Sigmoid colon (tissue), 7 donors: ENCODE measurements at regions of chr1 and their contacts with region 1.

Region 1: GRCh38 chr1:12208764-12209494 is 20.9 kb upstream of the VPS13D start:
- DNase-seq: peak; percentile 91
- H3K4me3 ChIP-seq: no peak overlapping the region
- H3K27ac ChIP-seq: no peak overlapping the region
- H3K4me1 ChIP-seq: peaks cover 0 to 9% (median 3%) of the 10 kb centered on the region in 4 donors
- H3K27me3 ChIP-seq: no peaks in the 10 kb centered on the region
- CTCF ChIP-seq: peak; percentile 93 to 97 (median 94)
- EP300 ChIP-seq: no peak
- POLR2A ChIP-seq: no peak

Region 2: GRCh38 chr1:12124693-12125421 is 84.1 kb before region 1 on chr1:
- intact Hi-C with region 1: loop called (anchors 1 kb)
- DNase-seq: peak; percentile 93
- H3K4me3 ChIP-seq: no peak overlapping the region
- H3K27ac ChIP-seq: peak overlapping the region in 2 of 4 donors; percentile 4 to 33
- H3K4me1 ChIP-seq: peaks cover 0 to 22% (median 17%) of the 10 kb centered on the region in 4 donors
- H3K27me3 ChIP-seq: no peaks in the 10 kb centered on the region
- CTCF ChIP-seq: peak; percentile 95 to 98 (median 98)
- EP300 ChIP-seq: no peak
- POLR2A ChIP-seq: no peak